IMR-90 (cell line): ENCODE measurements at regions of chr21 and their contacts with region 1.

Region 1: GRCh38 chr21:15729674-15730483 is at the start of gene USP25:
- DNase-seq: peak; percentile 60
- ATAC-seq: peak; percentile 94
- H3K4me3 ChIP-seq: peak within 1 kb of the TSS; percentile 96
- H3K27ac ChIP-seq: peak within 1 kb of the TSS; percentile 84
- H3K4me1 ChIP-seq: peaks cover 3% of the 10 kb centered on the region; the same call in 1 of the 2 replicates
- H3K27me3 ChIP-seq: no peaks in the 10 kb centered on the region; the same call in 1 of the 2 replicates
- CTCF ChIP-seq: peak; percentile 47
- POLR2A ChIP-seq: peak; percentile 60
- RAD21 ChIP-seq: 0 out of 2 replicates have a peak, but pooled peaks have one; percentile 9
- total RNA-seq, gene USP25: 23.3 and 30.8 TPM in 2 replicates

Region 2: DNA sequence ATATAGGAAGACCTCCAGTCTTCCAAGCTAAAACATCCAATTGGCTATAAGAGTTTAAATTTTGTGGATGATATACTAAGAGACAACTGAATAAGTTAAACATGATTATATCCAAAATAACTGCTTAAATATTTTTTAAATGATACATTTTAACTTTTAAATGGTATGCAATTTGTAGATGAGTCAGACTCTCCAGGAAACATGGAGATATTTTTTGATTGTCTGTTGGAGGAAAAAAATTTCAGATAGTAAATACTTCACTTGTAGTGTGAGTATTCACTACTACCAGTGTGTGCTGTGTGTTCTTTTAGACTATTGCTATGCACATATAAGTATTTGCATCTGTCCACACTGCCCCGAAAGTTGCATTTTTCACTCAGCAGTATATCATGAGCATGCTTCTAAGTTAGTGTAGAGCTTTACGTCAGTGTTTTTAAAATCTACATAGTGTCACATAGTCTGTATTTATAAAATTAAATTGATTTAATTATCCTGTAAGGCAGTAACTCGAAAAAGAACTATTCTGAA is 91.0 kb after region 1 on chr21:
- CTCF ChIA-PET with region 1: no interaction called
- POLR2A ChIA-PET with region 1: no interaction called
- dilution Hi-C with region 1: no loop called
- in situ Hi-C with region 1: no loop called
- intact Hi-C with region 1: no loop called
- DNase-seq: peak; percentile 47
- ATAC-seq: peak; percentile 69
- H3K4me3 ChIP-seq: no peak overlapping the region
- H3K27ac ChIP-seq: no peak overlapping the region
- H3K4me1 ChIP-seq: no peaks in the 10 kb centered on the region
- H3K27me3 ChIP-seq: no peaks in the 10 kb centered on the region
- CTCF ChIP-seq: no peak
- POLR2A ChIP-seq: no peak
- RAD21 ChIP-seq: no peak

Region 3: GRCh38 chr21:15841856-15842564 is 112.1 kb after region 1 on chr21:
- CTCF ChIA-PET with region 1: no interaction called
- POLR2A ChIA-PET with region 1: no interaction called
- dilution Hi-C with region 1: no loop called
- in situ Hi-C with region 1: no loop called
- intact Hi-C with region 1: loop called (anchors 5 kb)
- DNase-seq: peak; percentile 75
- ATAC-seq: peak; percentile 60
- H3K4me3 ChIP-seq: no peak overlapping the region
- H3K27ac ChIP-seq: no peak overlapping the region
- H3K4me1 ChIP-seq: peaks cover 2% of the 10 kb centered on the region
- H3K27me3 ChIP-seq: no peaks in the 10 kb centered on the region
- CTCF ChIP-seq: no peak
- POLR2A ChIP-seq: no peak
- RAD21 ChIP-seq: no peak